ENCODE measurements at regions of chr16 and their contacts with region 1.

Region 1: DNA sequence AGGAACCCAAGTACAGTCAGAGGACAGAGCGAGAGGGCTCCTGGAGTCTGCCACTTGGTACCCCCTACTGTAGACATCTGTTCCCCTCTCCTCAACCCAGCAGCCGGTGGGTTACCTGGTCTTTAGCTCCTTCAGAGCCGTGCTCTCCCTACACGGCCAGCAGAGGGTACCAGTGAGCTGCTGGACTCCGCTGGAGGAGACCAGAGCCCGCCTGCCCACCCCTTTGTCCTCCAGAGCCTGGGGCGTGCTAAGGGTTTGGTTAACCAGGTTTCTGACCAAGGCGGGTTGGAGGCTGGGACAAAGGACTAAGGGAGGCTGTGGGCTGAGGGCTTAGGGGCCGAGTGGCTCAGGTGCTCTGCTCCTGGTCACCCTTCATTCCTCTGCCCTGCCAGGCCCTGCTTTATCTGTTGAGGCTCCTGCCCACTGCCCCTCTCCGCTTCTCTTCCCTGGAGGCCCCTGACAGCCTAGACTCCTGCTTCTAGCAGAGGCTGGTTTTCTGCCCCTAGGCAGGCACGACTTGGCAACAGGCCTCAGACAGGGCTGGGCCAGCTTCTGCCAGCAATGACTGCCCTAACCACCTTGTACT is 2.7 kb upstream of the HSD11B2 start:
- DNase-seq: no peak
- H3K4me3 ChIP-seq: no peak overlapping the region
- H3K27me3 ChIP-seq: peaks cover 31% of the 10 kb centered on the region
- CTCF ChIP-seq: peak; percentile 93

Region 2: GRCh38 chr16:67415872-67416793 is 12.1 kb before region 1 on chr16 and contains the start of gene ZDHHC1:
- CTCF ChIA-PET with region 1: interaction called, 54 read pairs
- POLR2A ChIA-PET with region 1: no interaction called
- DNase-seq: no peak
- H3K4me3 ChIP-seq: peak within 1 kb of the TSS; percentile 77
- H3K27me3 ChIP-seq: no peaks in the 10 kb centered on the region; the same call in 1 of the 2 replicates
- CTCF ChIP-seq: 0 out of 2 replicates have a peak, but pooled peaks have one; percentile 27
- polyA plus RNA-seq, gene ZDHHC1: 3.5 and 7.4 TPM in 2 replicates

Region 3: DNA sequence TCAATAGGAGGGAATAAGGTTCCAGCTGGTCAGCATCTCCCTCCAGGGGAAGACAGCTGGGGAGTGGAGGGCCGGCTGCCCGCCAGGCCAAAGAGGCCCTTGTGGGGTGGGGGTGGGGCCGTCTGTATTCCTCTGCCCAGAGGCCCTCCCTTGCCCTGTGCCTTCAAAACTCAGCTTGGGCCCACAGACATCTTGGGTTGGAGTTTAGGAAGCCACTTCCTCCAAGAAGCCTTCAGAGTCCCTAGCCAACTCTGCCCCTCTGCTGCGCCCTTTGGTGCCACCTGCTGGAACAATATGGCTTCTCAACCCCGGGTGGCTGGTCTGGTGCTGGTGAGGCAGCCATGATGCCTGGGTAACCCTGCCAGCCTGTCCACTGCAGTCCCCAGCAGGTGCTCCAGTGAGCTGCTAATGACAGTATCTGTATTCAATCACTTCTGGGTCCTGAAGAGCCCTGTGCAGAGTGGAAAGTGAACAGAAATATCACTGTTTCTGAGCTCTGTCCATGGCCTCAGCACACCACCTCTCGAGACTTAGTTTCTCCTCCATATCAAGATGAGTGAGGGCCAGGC is 19.4 kb after region 1 on chr16:
- CTCF ChIA-PET with region 1: interaction called, 47 read pairs
- POLR2A ChIA-PET with region 1: interaction called, 7 read pairs
- DNase-seq: no peak
- H3K4me3 ChIP-seq: no peak overlapping the region
- H3K27me3 ChIP-seq: no peaks in the 10 kb centered on the region
- CTCF ChIP-seq: peak; percentile 56

Region 4: GRCh38 chr16:67474551-67475455 is 46.6 kb after region 1 on chr16:
- CTCF ChIA-PET with region 1: interaction called, 276 read pairs
- POLR2A ChIA-PET with region 1: no interaction called
- DNase-seq: no peak
- H3K4me3 ChIP-seq: no peak overlapping the region
- H3K27me3 ChIP-seq: no peaks in the 10 kb centered on the region
- CTCF ChIP-seq: no peak

Region 5: DNA sequence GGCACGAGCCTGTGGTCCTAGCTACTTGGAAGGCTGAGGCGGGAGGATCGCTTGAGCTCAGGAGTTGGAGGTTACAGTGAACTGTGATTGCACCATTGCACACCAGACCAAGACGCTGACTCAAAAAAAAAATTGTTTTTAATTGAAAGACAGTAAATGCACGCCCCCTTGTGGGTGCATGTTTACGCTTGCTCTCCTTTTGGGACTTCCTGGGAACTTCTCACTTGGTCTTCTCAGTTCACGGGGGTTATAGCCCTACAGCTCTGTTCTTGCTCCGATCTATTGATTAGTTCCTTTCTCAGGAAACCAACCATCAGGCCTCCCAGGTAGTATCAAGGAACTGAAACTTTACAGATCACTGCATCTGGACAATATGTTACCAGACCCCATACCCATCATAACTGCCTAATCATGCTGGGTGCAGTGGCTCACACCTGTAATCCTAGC is 86.2 kb after region 1 on chr16:
- CTCF ChIA-PET with region 1: interaction called, 11 read pairs
- POLR2A ChIA-PET with region 1: no interaction called
- DNase-seq: peak; percentile 24
- H3K4me3 ChIP-seq: no peak overlapping the region
- H3K27me3 ChIP-seq: no peaks in the 10 kb centered on the region
- CTCF ChIP-seq: peak; percentile 72

Measured in BJ (cell line).